Dorsolateral prefrontal cortex (tissue), 120 donors: ENCODE measurements at regions of chr9 and their contacts with region 1.

Region 1: GRCh38 chr9:111631071-111631971 is at the start of gene DNAJC25:
- DNase-seq: peak; percentile 94 to 99 (median 97)
- H3K4me3 ChIP-seq: peak within 1 kb of the TSS; percentile 75 to 100 (median 95)
- H3K27ac ChIP-seq: peak within 1 kb of the TSS in 57 of 59 donors; percentile 15 to 90 (median 80)
- H3K27me3 ChIP-seq: no peaks in the 10 kb centered on the region
- CTCF ChIP-seq: peak in 45 of 56 donors; percentile 3 to 64 (median 39)
- total RNA-seq, gene DNAJC25: 2.6 to 7.1 (median 4.9) TPM

Region 2: DNA sequence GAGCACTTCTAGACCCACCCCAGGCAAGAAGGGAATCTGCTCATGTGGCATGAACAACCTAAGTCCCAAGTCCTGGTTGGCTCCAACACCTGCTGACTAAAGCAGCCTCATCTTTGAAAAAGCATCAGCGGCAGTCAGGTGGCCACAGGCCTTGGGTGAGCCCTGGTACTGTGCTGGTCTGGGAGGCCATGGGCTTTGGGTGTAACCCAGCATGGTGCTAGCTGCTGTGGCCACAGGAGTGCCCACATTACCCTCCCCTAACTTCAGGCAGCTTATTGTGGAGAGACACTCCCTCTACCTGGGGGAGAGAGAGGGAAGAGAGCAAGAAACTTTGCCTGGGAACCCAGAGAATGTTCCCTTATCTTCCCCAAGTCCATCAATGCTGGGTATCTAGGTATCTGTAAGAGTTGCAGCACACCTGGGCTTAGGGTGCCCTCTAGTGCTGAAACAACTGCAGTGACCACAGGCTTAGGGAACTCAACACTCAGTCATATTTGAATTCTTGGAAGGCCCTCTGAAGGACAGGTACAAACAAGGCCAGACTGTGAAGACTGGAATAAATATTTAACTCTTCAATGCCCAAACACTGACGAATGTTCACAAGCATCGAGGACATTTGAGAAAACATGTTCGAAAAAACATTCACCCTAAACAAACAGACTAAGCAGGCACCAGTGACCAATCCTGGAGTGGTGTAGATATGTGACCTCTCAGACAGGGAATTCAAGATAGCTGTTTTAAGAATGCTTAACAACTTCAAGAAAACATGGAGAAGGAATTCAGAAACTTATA is 231.4 kb before region 1 on chr9:
- intact Hi-C with region 1: loop called in 1 of 2 experiments (anchors 5 kb)
- DNase-seq: no peak
- H3K4me3 ChIP-seq: no peak overlapping the region
- H3K27ac ChIP-seq: peak overlapping the region in 8 of 59 donors; percentile 2 to 59 (median 28)
- H3K27me3 ChIP-seq: no peaks in the 10 kb centered on the region
- CTCF ChIP-seq: peak in 6 of 56 donors; percentile 8 to 22 (median 14)

Region 3: GRCh38 chr9:111597817-111598729 is 33.2 kb before region 1 on chr9:
- intact Hi-C with region 1: loop called in 1 of 2 experiments (anchors 5 kb)
- DNase-seq: peak; percentile 32 to 63 (median 60)
- H3K4me3 ChIP-seq: peak overlapping the region; percentile 58 to 90 (median 78)
- H3K27ac ChIP-seq: peak overlapping the region in 27 of 59 donors; percentile 2 to 88 (median 54)
- H3K27me3 ChIP-seq: no peaks in the 10 kb centered on the region
- CTCF ChIP-seq: peak; percentile 39 to 78 (median 66)

Region 4: GRCh38 chr9:111661150-111661801 is 30.0 kb after region 1 on chr9 and contains the start of gene GNG10:
- intact Hi-C with region 1: loop called in 1 of 2 experiments (anchors 1 kb)
- DNase-seq: peak; percentile 26 to 77 (median 49)
- H3K4me3 ChIP-seq: peak within 1 kb of the TSS; percentile 60 to 90 (median 77)
- H3K27ac ChIP-seq: peak within 1 kb of the TSS in 55 of 59 donors; percentile 1 to 92 (median 72)
- H3K27me3 ChIP-seq: no peaks in the 10 kb centered on the region
- CTCF ChIP-seq: peak in 1 of 56 donors; percentile 8
- total RNA-seq, gene GNG10: 11.6 to 31.8 (median 21.8) TPM

Region 5: GRCh38 chr9:112333639-112334431 is 702.5 kb after region 1 on chr9:
- intact Hi-C with region 1: loop called in 1 of 2 experiments (anchors 10 kb)
- DNase-seq: peak; percentile 74 to 93 (median 88)
- H3K4me3 ChIP-seq: peak overlapping the region; percentile 61 to 99 (median 90)
- H3K27ac ChIP-seq: peak overlapping the region; percentile 82 to 99 (median 95)
- H3K27me3 ChIP-seq: no peaks in the 10 kb centered on the region
- CTCF ChIP-seq: peak in 54 of 56 donors; percentile 31 to 78 (median 54)

Region 6: GRCh38 chr9:112379177-112380101 is 748.1 kb after region 1 on chr9:
- intact Hi-C with region 1: loop called in 1 of 2 experiments (anchors 5 kb)
- DNase-seq: peak; percentile 97 to 99 (median 98)
- H3K4me3 ChIP-seq: peak overlapping the region; percentile 68 to 99 (median 91)
- H3K27ac ChIP-seq: peak overlapping the region; percentile 79 to 99 (median 96)
- H3K27me3 ChIP-seq: no peaks in the 10 kb centered on the region
- CTCF ChIP-seq: peak in 49 of 56 donors; percentile 8 to 67 (median 33)